SK-N-SH (cell line): ENCODE measurements at regions of chr14 and their contacts with region 1.

Region 1: DNA sequence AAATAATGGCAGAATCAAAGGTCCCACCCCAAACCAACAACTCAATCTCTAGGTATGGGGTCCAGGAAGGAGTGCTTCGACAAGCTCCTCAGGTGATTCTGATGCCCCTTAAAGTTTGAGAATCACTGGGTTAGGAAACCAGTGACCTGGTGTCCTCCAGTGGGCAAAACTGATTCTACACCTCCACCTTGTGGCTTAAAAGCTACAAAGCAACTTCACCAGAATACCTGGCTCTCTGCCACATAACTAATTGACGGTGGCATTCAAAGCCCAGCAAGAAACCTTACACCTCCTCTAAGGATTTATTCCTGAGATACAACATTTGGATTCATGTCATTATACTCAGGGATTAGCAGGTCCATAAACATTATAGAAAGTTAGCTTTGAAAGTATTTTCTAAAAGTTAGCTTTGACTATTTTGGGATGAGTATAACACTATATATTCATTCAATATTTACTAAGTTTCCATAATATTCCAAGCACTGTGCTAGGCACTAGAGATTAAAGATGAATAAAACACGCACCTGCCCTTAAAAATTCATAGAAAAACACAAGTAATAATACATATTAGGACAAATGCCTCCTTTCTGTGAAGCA is 45.4 kb downstream of the DCAF5 start:
- DNase-seq: peak; percentile 61
- H3K4me3 ChIP-seq: no peak overlapping the region
- H3K27ac ChIP-seq: no peak overlapping the region
- H3K4me1 ChIP-seq: no peaks in the 10 kb centered on the region; a peak in 1 of 4 replicates
- H3K27me3 ChIP-seq: no peaks in the 10 kb centered on the region
- CTCF ChIP-seq: peak; percentile 81
- EP300 ChIP-seq: no peak
- RAD21 ChIP-seq: peak; percentile 92

Region 2: GRCh38 chr14:68884031-68885030 is 223.2 kb before region 1 on chr14:
- CTCF ChIA-PET with region 1: interaction called, 10 read pairs
- POLR2A ChIA-PET with region 1: no interaction called
- DNase-seq: no peak
- H3K4me3 ChIP-seq: no peak overlapping the region
- H3K27ac ChIP-seq: peak overlapping the region; percentile 23 to 44; a peak in 3 of 4 replicates
- H3K4me1 ChIP-seq: peaks cover 4 to 12% of the 10 kb centered on the region in 2 experiments; a peak in 2 of 4 replicates
- H3K27me3 ChIP-seq: no peaks in the 10 kb centered on the region
- CTCF ChIP-seq: no peak
- EP300 ChIP-seq: no peak
- RAD21 ChIP-seq: no peak

Region 3: GRCh38 chr14:68926236-68926635 is 181.3 kb before region 1 on chr14:
- CTCF ChIA-PET with region 1: interaction called, 15 read pairs
- POLR2A ChIA-PET with region 1: no interaction called
- DNase-seq: no peak
- H3K4me3 ChIP-seq: no peak overlapping the region
- H3K27ac ChIP-seq: no peak overlapping the region
- H3K4me1 ChIP-seq: peaks cover 0 to 29% of the 10 kb centered on the region in 2 experiments; a peak in 2 of 4 replicates
- H3K27me3 ChIP-seq: no peaks in the 10 kb centered on the region
- CTCF ChIP-seq: peak; percentile 51
- EP300 ChIP-seq: no peak
- RAD21 ChIP-seq: no peak

Region 4: DNA sequence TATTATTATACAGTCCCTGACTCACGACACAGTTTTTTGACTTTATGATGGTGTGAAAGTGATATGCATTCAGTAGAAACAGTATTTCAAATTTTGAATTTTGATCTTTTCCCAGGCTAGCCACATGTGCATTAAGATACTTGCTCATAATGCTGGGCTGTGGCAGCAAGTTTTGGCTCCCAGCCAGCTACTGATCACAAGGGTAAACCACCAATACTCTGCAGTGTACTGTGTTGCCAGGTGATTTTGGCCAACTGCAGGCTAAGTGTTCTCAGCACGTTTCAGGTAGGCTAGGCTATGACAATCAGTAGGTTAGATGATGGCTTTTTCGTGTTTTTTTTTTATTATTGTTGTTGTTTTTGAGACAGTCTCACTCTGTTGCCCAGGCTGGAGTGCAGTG is 59.0 kb before region 1 on chr14:
- CTCF ChIA-PET with region 1: interaction called, 13 read pairs
- POLR2A ChIA-PET with region 1: no interaction called
- DNase-seq: no peak
- H3K4me3 ChIP-seq: no peak overlapping the region
- H3K27ac ChIP-seq: no peak overlapping the region
- H3K4me1 ChIP-seq: peaks cover 28 to 50% of the 10 kb centered on the region in 2 experiments
- H3K27me3 ChIP-seq: no peaks in the 10 kb centered on the region
- CTCF ChIP-seq: no peak
- EP300 ChIP-seq: no peak
- RAD21 ChIP-seq: no peak

Region 5: DNA sequence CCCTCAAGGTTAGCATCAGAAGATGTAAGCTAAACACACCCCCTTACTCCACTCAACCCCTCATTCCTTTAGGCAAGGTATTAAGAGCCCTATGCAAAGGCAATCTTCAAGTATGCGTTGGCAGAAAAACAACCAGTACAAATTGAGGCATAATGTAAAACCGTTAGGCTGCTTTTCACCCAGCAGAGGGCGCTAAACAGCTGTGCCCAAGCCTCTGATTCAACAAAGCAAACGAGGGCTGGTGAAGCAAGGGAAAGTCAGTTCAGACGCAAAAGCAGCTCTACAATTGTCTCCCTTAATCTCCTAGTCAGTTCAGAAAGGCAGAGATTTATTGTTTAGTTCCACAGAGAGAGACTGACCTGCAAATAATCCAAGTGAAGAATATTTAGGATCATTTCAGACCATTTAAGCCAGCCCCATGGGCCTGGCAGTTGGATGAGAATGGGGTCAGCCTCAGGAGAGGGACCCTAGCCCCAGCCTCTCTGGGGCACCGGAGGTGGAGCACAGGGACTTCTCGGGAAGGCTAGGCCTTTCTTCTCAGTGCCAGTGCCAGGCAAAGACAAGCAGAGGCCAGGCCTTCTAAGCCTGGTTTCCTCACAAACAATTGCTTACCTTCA is 21.9 kb after region 1 on chr14:
- CTCF ChIA-PET with region 1: interaction called, 27 read pairs
- POLR2A ChIA-PET with region 1: no interaction called
- DNase-seq: peak; percentile 55
- H3K4me3 ChIP-seq: peak overlapping the region in 1 of 2 experiments; percentile 8; a peak in 1 of 4 replicates
- H3K27ac ChIP-seq: peak overlapping the region; percentile 46 to 64
- H3K4me1 ChIP-seq: peaks cover 24 to 28% of the 10 kb centered on the region in 2 experiments
- H3K27me3 ChIP-seq: no peaks in the 10 kb centered on the region
- CTCF ChIP-seq: peak; percentile 97
- EP300 ChIP-seq: no peak
- RAD21 ChIP-seq: peak; percentile 93

Region 6: GRCh38 chr14:69141550-69141949 is 34.0 kb after region 1 on chr14:
- CTCF ChIA-PET with region 1: no interaction called
- POLR2A ChIA-PET with region 1: no interaction called
- DNase-seq: no peak
- H3K4me3 ChIP-seq: no peak overlapping the region
- H3K27ac ChIP-seq: no peak overlapping the region
- H3K4me1 ChIP-seq: peaks cover 2 to 17% of the 10 kb centered on the region in 2 experiments; a peak in 2 of 4 replicates
- H3K27me3 ChIP-seq: no peaks in the 10 kb centered on the region
- CTCF ChIP-seq: no peak
- EP300 ChIP-seq: no peak
- RAD21 ChIP-seq: no peak